Panc1 (cell line): ENCODE measurements at regions of chr10 and their contacts with region 1.

Region 1: DNA sequence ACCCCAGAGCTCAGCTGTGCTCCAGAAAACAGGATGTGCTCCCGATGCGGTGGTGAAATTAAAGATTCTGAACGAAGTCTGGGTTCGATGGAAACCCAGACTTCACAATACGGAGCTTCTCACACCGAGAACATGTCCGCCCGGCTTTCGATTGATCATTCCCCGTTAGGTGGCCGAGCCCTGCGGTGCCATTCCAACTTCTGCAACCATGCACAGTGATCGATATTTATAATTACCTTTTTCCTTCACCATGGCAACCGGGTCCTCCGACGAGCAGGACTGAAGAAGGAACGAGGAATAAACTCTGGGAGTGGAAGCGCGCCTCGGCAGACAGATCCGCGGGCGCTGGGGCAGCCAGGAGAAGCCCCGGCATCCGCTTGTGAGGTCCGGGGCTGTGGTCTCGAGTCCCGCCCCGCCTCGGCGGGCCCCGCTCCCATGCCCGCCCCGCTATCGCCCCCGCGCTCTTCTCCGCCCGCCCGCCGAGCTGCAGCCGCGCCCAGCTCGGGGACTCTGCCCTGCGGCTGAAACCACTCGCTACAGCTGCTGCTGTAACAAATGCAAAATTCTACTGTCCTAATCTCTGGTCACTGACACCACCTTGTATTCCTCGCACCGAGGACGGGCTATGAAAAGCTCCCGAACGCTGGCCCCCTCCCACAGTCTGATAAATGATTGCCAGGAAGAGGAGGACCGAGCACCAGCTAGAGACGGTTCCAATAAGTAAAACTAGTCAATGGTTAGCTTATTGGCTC is 26.2 kb downstream of the ABLIM1 start:
- DNase-seq: no peak
- ATAC-seq: peak; percentile 36
- H3K4me3 ChIP-seq: peak overlapping the region; percentile 73 to 78
- H3K27ac ChIP-seq: peak overlapping the region; percentile 96
- H3K4me1 ChIP-seq: peaks cover 83% of the 10 kb centered on the region
- H3K27me3 ChIP-seq: no peaks in the 10 kb centered on the region
- CTCF ChIP-seq: no peak

Region 2: GRCh38 chr10:114223066-114223465 is 408.8 kb before region 1 on chr10:
- CTCF ChIA-PET with region 1: no interaction called
- POLR2A ChIA-PET with region 1: no interaction called
- in situ Hi-C with region 1: no loop called
- intact Hi-C with region 1: no loop called
- DNase-seq: no peak
- ATAC-seq: peak; percentile 34; the same call in 1 of the 2 replicates
- H3K4me3 ChIP-seq: no peak overlapping the region
- H3K27ac ChIP-seq: no peak overlapping the region
- H3K4me1 ChIP-seq: no peaks in the 10 kb centered on the region
- H3K27me3 ChIP-seq: peaks cover 32% of the 10 kb centered on the region
- CTCF ChIP-seq: no peak

Region 3: DNA sequence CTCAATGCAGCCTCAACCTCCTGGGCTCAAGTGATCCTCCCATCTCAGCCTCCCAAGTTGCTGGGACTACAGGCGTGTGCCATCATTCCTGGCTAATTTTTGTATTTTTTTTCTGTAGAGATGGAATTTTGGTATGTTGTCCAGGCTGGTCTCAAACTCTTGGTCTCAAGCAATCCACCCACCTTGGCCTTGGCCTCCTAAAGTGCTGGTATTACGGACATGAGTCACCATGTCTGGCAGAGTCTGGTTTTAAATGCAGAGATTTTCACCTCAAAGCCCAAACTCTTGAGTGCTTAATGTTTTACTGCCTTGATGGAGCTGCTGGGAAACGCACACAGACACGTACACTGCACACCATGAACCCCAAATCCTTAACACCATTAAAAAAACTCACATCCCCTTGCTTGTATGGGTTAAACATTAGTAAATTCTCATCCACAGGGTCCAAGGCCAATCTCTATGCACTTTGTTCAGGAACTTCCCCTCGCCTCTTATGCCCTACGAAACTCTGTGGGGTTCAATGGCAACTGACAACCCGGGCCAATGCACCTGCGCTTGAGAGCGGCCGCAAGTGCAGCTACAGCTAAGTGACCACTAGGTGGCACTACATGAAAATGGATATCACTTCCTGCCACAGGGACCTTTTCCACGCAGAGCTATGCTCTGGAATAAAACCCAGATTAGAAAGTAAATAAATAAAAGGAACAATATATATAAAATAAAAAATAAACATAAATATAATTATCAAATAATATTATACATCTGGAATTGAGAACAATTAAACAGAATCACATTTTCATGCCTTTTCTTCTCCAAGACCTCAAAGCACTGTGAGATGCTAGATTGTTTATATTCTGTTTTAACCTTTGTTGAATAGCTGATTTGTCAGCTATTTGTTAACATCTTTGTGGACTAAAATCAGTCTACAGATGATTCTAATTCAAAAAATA is 160.6 kb before region 1 on chr10:
- CTCF ChIA-PET with region 1: no interaction called
- POLR2A ChIA-PET with region 1: no interaction called
- in situ Hi-C with region 1: no loop called
- intact Hi-C with region 1: loop called (anchors 10 kb)
- DNase-seq: peak; percentile 59
- ATAC-seq: peak; percentile 89
- H3K4me3 ChIP-seq: no peak overlapping the region
- H3K27ac ChIP-seq: peak overlapping the region; percentile 36; the same call in 1 of the 2 replicates
- H3K4me1 ChIP-seq: peaks cover 21% of the 10 kb centered on the region
- H3K27me3 ChIP-seq: no peaks in the 10 kb centered on the region
- CTCF ChIP-seq: peak; percentile 91

Region 4: DNA sequence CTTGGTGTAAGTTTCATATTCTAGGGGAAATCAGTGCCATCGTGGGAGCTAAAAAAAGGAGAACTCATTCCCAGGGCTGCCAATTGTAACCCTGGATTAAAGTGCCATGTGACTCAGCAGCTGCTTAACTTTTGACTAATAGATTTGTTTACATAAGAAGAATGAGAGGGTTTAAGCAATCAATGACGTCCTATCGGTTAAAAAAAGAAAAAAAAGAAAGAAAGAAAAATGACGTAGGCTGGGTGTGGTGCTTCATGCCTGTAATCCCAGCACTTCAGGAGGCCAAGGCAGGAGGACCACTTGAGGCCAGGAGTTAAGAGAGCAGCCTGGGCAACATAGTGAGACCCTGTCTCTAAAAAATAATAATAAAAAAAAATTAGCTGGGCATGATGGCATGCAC is 111.4 kb before region 1 on chr10:
- CTCF ChIA-PET with region 1: no interaction called
- POLR2A ChIA-PET with region 1: no interaction called
- in situ Hi-C with region 1: no loop called
- intact Hi-C with region 1: no loop called
- DNase-seq: peak; percentile 82
- ATAC-seq: peak; percentile 30; the same call in 1 of the 2 replicates
- H3K4me3 ChIP-seq: no peak overlapping the region
- H3K27ac ChIP-seq: no peak overlapping the region
- H3K4me1 ChIP-seq: peaks cover 62% of the 10 kb centered on the region
- H3K27me3 ChIP-seq: no peaks in the 10 kb centered on the region
- CTCF ChIP-seq: no peak

Region 5: DNA sequence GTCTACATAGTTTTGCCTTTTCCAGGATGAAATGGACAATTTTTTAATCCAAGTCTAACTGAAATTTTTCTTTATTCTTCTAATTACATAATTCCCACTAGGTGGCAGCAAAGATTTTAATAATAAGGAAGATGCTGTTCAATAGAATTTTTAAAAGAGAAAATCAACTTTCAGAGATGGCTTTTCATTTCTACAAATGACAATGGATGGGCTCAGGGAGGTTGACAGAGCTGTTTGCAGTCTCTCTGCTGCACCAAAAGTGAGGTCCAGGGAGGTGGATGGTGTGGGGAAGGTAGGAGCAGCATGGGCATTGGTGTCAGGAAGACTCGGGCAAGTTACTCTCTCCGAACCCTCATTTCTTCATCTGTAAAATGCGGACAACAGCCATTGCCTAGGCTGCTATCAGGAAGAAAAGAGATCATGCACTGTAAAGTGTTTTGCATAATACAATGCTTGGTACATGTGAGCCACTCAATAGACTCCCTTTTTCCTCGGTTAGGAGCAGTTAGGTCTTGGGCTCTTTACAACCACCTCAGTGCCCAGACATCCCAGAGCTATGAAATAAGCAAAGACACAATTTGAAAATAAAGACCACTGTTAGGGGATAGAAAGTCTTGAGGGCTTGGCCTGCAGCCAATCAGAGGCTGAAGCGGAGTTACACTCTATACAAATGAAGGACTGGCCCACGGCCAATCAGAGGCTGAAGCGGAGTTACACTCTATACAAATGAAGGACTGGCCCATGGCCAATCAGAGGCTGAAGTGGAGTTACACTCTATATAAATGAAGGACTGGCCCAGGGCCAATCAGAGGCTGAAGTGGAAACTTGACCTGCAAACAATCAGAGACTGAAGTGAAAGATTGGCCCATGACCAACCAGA is 80.8 kb before region 1 on chr10:
- CTCF ChIA-PET with region 1: interaction called, 6 read pairs
- POLR2A ChIA-PET with region 1: no interaction called
- in situ Hi-C with region 1: no loop called
- intact Hi-C with region 1: loop called (anchors 5 kb)
- DNase-seq: no peak
- ATAC-seq: peak; percentile 47
- H3K4me3 ChIP-seq: no peak overlapping the region
- H3K27ac ChIP-seq: peak overlapping the region; percentile 81
- H3K4me1 ChIP-seq: peaks cover 34% of the 10 kb centered on the region
- H3K27me3 ChIP-seq: no peaks in the 10 kb centered on the region
- CTCF ChIP-seq: peak; percentile 62

Region 6: DNA sequence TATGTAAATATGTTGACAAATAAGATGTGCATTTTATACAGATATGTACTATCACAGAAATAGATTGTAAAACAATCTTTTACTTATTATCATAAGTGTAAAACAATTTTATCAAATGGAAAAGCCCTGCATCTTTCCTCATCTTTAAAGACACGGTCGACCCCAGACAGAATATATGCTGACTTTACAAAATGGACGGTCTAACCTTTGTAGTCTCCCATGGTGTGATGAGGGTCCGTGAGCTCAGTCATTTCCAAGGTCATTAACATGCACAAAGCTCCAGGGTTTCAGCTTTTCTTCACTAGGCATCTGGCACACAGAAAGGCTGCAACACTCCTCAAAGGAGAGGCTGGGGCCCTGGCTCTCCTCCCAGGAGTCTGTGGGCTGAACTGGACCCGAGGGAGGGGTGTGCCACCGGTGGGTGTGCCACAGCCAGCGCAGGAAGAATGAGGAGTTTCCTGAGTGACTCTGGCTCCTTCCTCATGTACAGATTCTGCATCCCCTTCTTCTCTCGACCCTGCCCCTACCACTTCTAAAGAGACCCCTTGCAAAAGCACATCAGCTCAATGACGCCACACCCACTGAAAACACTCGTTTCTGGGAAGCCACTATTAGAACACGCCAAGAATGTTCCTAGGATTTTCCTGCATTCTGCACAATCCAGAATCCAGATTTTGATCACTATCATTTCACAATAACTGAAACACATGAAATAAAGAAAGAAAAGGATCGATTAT is 52.4 kb after region 1 on chr10:
- CTCF ChIA-PET with region 1: no interaction called
- POLR2A ChIA-PET with region 1: interaction called, 8 read pairs
- in situ Hi-C with region 1: no loop called
- intact Hi-C with region 1: loop called (anchors 5 kb)
- DNase-seq: no peak
- ATAC-seq: peak; percentile 74
- H3K4me3 ChIP-seq: peak overlapping the region; percentile 48 to 55
- H3K27ac ChIP-seq: peak overlapping the region; percentile 100
- H3K4me1 ChIP-seq: peaks cover 90% of the 10 kb centered on the region
- H3K27me3 ChIP-seq: no peaks in the 10 kb centered on the region
- CTCF ChIP-seq: no peak

Region 7: GRCh38 chr10:114779803-114780609 is 148.2 kb after region 1 on chr10:
- CTCF ChIA-PET with region 1: no interaction called
- POLR2A ChIA-PET with region 1: no interaction called
- in situ Hi-C with region 1: no loop called
- intact Hi-C with region 1: loop called (anchors 5 kb)
- DNase-seq: peak; percentile 90
- ATAC-seq: peak; percentile 90
- H3K4me3 ChIP-seq: no peak overlapping the region
- H3K27ac ChIP-seq: peak overlapping the region; percentile 98
- H3K4me1 ChIP-seq: peaks cover 60% of the 10 kb centered on the region
- H3K27me3 ChIP-seq: no peaks in the 10 kb centered on the region
- CTCF ChIP-seq: no peak